CD14-positive monocyte (primary cell): ENCODE measurements at regions of chr17 and their contacts with region 1.

Region 1: DNA sequence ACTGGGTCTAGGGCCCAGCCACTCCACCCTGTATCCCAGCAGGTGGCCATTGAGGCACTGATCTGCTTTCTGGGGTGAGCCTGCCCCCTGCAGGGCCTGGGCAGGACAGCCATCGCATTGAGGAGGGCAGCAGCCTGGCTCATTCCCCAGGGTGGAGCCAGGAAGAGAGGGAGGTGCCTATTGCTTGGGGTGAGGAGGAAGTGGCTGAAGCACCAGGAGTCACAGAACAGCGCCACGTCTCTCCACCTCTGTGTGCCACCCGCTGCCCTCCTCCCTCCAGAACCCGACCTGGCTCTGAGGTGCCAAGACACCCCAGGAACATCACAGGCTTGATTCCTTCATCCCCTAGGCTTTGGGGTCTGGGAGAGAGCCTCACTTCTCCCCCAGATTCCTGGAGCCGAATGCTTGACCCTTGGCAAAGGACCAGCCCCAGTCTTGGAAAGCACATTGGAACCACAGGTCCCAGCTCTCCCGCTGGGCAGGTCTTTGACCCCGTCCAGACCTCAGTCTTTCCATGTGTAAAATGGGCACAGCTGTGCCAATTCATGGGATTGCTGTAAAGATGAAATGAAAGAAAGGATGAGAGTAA is 7.2 kb upstream of the KRT36 start:
- DNase-seq: peak; percentile 90 to 93 (median 91)
- H3K4me3 ChIP-seq: peak overlapping the region in 1 of 3 experiments; percentile 58
- H3K4me3 Mint-ChIP-seq: peak overlapping the region; percentile 59 to 60
- H3K27ac ChIP-seq: peak overlapping the region; percentile 93 to 97
- H3K27ac Mint-ChIP-seq: peak overlapping the region; percentile 91 to 98 (median 96)
- H3K4me1 ChIP-seq: peaks cover 61 to 68% of the 10 kb centered on the region in 2 donors
- H3K4me1 Mint-ChIP-seq: peaks cover 71% of the 10 kb centered on the region
- H3K27me3 ChIP-seq: no peaks in the 10 kb centered on the region
- H3K27me3 Mint-ChIP-seq: peaks cover 2 to 7% (median 5%) of the 10 kb centered on the region in 3 donors
- CTCF ChIP-seq: peak; percentile 91

Region 2: DNA sequence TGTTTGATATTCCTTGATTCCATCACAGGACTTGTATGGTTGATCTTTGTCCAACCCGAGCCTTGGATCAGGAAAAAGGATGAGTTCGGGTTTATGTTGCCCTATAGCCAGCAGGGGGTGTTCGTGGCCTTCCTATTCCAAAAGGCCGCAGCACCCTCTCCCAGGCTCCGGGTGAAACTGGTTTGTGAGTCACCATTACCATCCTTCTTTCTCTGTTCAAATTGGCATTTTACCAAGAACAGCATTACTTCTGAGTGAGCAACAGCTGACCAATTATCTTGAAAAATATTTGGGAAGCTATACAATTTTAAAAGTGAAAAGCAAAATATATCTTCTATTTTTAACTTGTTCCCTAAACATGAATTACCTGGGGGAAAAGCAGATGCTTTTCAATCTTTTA is 587.6 kb before region 1 on chr17:
- intact Hi-C with region 1: loop called (anchors 5 to 10 kb)
- DNase-seq: peak; percentile 87 to 94 (median 93)
- H3K4me3 ChIP-seq: no peak overlapping the region
- H3K4me3 Mint-ChIP-seq: no peak overlapping the region
- H3K27ac ChIP-seq: peak overlapping the region in 1 of 2 donors; percentile 28
- H3K27ac Mint-ChIP-seq: peak overlapping the region in 2 of 7 donors; percentile 26 to 81
- H3K4me1 ChIP-seq: peaks cover 42 to 44% of the 10 kb centered on the region in 2 donors
- H3K4me1 Mint-ChIP-seq: peaks cover 35% of the 10 kb centered on the region
- H3K27me3 ChIP-seq: peaks cover 4 to 9% of the 10 kb centered on the region in 2 donors
- H3K27me3 Mint-ChIP-seq: peaks cover 14 to 23% (median 17%) of the 10 kb centered on the region in 3 donors
- CTCF ChIP-seq: peak; percentile 93

Region 3: DNA sequence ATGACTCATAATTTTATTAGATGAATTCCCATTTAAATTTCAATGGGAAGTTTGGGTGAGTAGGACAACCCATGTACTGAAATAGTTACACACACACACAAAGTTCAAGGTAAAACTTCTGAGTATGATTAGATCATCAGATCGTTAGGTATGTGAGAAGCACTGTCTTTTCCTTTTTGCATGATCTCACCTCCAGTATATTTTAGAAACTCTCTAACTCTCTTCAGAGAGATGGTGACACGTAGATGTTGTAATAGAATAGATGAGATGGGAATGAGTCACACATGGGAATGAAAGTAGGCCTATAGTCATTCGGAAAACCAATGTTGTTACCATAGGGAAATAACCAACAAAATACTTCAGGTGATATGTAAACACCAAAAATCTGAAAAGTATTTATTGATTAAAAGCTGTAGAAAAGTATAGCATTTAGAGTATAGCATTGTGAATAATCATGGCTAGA is 581.7 kb before region 1 on chr17:
- intact Hi-C with region 1: loop called in 1 of 2 experiments (anchors 10 kb)
- DNase-seq: peak; percentile 72 to 94 (median 91)
- H3K4me3 ChIP-seq: peak overlapping the region in 1 of 3 experiments; percentile 21
- H3K4me3 Mint-ChIP-seq: no peak overlapping the region
- H3K27ac ChIP-seq: peak overlapping the region; percentile 56 to 88
- H3K27ac Mint-ChIP-seq: peak overlapping the region; percentile 76 to 96 (median 93)
- H3K4me1 ChIP-seq: peaks cover 64 to 69% of the 10 kb centered on the region in 2 donors
- H3K4me1 Mint-ChIP-seq: peaks cover 47% of the 10 kb centered on the region
- H3K27me3 ChIP-seq: no peaks in the 10 kb centered on the region
- H3K27me3 Mint-ChIP-seq: peaks cover 0 to 3% (median 0%) of the 10 kb centered on the region in 3 donors
- CTCF ChIP-seq: no peak

Region 4: GRCh38 chr17:41678907-41679739 is 182.2 kb after region 1 on chr17:
- intact Hi-C with region 1: loop called in 1 of 2 experiments (anchors 5 kb)
- DNase-seq: peak; percentile 78 to 88 (median 84)
- H3K4me3 ChIP-seq: peak overlapping the region; percentile 36 to 75 (median 72)
- H3K4me3 Mint-ChIP-seq: peak overlapping the region; percentile 81 to 93
- H3K27ac ChIP-seq: peak overlapping the region; percentile 89 to 93
- H3K27ac Mint-ChIP-seq: peak overlapping the region; percentile 98 to 99 (median 99)
- H3K4me1 ChIP-seq: peaks cover 35 to 61% of the 10 kb centered on the region in 2 donors
- H3K4me1 Mint-ChIP-seq: peaks cover 58% of the 10 kb centered on the region
- H3K27me3 ChIP-seq: no peaks in the 10 kb centered on the region
- H3K27me3 Mint-ChIP-seq: peaks cover 0 to 3% (median 0%) of the 10 kb centered on the region in 3 donors
- CTCF ChIP-seq: peak; percentile 42